A549 (cell line): ENCODE measurements at regions of chr1 and their contacts with region 1.

Region 1: DNA sequence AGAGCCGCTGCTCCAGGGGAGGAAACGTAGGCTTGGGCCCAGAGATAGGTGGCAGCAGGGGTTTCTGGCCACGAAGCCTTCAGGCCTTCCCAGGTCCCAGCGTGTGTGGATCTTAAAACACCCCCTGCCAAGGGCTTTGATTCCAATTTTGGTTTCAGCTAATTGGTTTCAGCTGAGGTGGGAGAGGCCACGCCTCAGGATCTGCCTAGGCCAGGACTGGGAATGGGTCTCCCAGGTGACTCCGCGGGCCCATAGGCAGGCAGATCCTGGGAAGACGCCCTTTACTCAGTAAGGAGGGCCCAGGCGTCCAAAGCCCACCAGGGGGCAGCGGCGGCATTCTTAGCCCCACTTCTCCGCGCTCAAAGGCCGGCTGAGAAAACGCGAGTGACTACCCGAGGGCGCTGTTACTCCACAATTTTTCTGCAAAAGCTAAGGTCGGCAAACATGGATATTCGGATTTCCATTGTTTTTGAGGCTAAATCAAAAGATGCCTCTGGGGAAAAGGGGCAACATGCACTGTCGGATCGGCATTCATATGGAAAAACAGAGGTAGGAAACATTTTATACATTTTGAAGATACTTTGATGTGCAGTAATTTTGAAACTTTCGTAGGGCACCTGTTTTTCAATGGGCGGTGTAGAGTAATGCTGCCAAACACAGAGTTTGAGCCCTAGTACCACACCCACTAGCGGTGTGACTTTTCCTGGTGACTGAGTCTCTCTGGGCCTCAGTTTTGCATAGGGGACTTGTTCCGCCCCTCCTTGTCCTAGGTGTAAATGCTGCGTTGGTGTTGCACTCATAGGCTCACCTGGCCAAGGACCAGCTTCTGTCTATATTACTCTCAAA is 31.8 kb upstream of the BCL10 start:
- DNase-seq: peak; percentile 69 to 84
- ATAC-seq: peak; percentile 98 to 100
- H3K4me3 ChIP-seq: no peak overlapping the region
- H3K27ac ChIP-seq: peak overlapping the region; percentile 59 to 74; a peak in 4 of 6 replicates
- H3K4me1 ChIP-seq: peaks cover 7% of the 10 kb centered on the region; the same call in 2 of the 3 replicates
- CTCF ChIP-seq: peak; percentile 98
- EP300 ChIP-seq: no peak
- POLR2A ChIP-seq: no peak
- RAD21 ChIP-seq: peak; percentile 99

Region 2: DNA sequence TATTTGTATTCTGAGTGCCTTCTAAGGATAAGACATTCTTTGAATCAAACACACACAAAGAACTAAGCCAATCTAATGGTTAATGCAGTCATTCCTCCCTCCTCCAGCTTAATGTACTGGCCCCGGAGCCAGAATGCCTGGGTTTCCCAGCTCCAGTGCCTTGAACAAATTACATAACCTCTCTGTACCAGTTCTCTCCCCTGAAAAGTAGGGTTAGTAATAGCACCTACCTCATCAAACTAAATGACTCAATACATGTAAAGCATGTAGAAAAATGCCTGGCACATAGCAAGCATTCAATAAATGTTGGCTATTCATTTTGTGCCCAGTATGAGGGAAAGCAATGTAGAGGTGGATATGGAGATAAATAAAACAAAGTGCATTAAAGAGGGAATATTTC is 62.8 kb before region 1 on chr1:
- CTCF ChIA-PET with region 1: no interaction called
- POLR2A ChIA-PET with region 1: no interaction called
- DNase-seq: no peak
- ATAC-seq: no peak
- H3K4me3 ChIP-seq: no peak overlapping the region
- H3K27ac ChIP-seq: no peak overlapping the region
- H3K4me1 ChIP-seq: no peaks in the 10 kb centered on the region
- CTCF ChIP-seq: no peak
- EP300 ChIP-seq: no peak
- POLR2A ChIP-seq: no peak
- RAD21 ChIP-seq: no peak

Region 3: GRCh38 chr1:85330711-85331290 is 22.6 kb after region 1 on chr1:
- CTCF ChIA-PET with region 1: interaction called, 18 read pairs
- POLR2A ChIA-PET with region 1: no interaction called
- DNase-seq: no peak
- ATAC-seq: no peak
- H3K4me3 ChIP-seq: no peak overlapping the region
- H3K27ac ChIP-seq: peak overlapping the region; percentile 69 to 84
- H3K4me1 ChIP-seq: peaks cover 53% of the 10 kb centered on the region
- CTCF ChIP-seq: no peak
- EP300 ChIP-seq: no peak
- POLR2A ChIP-seq: no peak
- RAD21 ChIP-seq: no peak

Region 4: GRCh38 chr1:85394130-85394529 is 85.9 kb after region 1 on chr1:
- CTCF ChIA-PET with region 1: interaction called, 16 read pairs
- POLR2A ChIA-PET with region 1: no interaction called
- DNase-seq: no peak
- ATAC-seq: no peak
- H3K4me3 ChIP-seq: no peak overlapping the region
- H3K27ac ChIP-seq: no peak overlapping the region
- H3K4me1 ChIP-seq: no peaks in the 10 kb centered on the region
- CTCF ChIP-seq: no peak
- EP300 ChIP-seq: no peak
- POLR2A ChIP-seq: no peak
- RAD21 ChIP-seq: no peak

Region 5: DNA sequence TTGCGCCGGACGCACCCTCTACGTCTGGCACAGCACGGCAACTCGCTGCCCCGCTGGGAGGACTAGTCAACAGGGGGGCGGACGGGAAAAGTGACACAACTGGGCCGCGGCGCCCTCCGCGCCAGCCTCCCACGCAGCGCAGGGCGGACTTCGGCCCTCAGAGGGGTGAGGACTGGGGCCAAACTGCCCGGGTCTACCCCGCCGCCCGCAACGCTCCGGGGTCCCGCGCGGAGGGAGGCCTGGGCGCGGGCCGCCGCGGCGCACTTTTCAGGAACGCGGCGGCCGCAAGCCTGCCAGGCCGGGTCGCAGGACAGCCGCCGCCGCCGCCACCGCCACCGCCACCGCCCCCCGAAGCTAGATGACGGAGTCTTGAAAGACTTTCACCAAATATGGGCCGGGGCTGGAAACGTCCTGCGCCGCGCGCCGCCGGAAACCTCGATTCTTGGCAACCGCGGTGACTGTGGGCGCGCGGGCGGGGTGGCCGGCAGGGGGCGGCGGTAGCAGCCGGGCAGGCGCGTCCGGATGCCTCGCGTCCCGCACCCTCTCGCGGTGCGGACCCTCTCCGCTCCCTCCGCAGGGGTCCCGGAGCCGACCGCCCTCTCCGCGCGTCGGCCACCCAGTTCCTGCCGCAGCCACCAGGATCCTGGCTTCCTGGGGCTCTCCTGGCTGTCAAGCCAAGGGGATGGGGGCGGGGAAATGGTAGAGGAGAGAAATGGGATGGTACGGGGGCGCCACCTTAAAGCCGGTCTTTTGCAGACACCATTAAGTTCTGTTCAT is 268.6 kb after region 1 on chr1:
- CTCF ChIA-PET with region 1: interaction called, 22 read pairs
- POLR2A ChIA-PET with region 1: interaction called, 12 read pairs
- DNase-seq: peak; percentile 43 to 84
- ATAC-seq: peak; percentile 55 to 64
- H3K4me3 ChIP-seq: peak overlapping the region; percentile 78
- H3K27ac ChIP-seq: peak overlapping the region; percentile 99 to 100
- H3K4me1 ChIP-seq: peaks cover 43% of the 10 kb centered on the region
- CTCF ChIP-seq: peak; percentile 60
- EP300 ChIP-seq: no peak
- POLR2A ChIP-seq: peak; percentile 34; the same call in 1 of the 2 replicates
- RAD21 ChIP-seq: peak; percentile 10 to 50; a peak in 2 of 5 replicates

Region 6: GRCh38 chr1:85612704-85613361 is 304.6 kb after region 1 on chr1:
- CTCF ChIA-PET with region 1: interaction called, 22 read pairs
- POLR2A ChIA-PET with region 1: no interaction called
- DNase-seq: peak; percentile 35 to 73
- ATAC-seq: peak; percentile 79 to 85
- H3K4me3 ChIP-seq: no peak overlapping the region
- H3K27ac ChIP-seq: peak overlapping the region; percentile 79 to 86
- H3K4me1 ChIP-seq: peaks cover 55% of the 10 kb centered on the region
- CTCF ChIP-seq: peak; percentile 55
- EP300 ChIP-seq: peak in 1 of 2 experiments; percentile 16; a peak in 1 of 5 replicates
- POLR2A ChIP-seq: no peak
- RAD21 ChIP-seq: peak; percentile 72 to 77